Common myeloid progenitor, CD34-positive (primary cell): ENCODE measurements at regions of chr7 and their contacts with region 1.

Region 1: GRCh38 chr7:140745266-140746058 is 49.0 kb downstream of the NDUFB2 start:
- DNase-seq: peak; percentile 3 to 29 (median 15)
- H3K4me3 ChIP-seq: no peak overlapping the region
- H3K27ac ChIP-seq: no peak overlapping the region
- H3K4me1 ChIP-seq: peaks cover 0 to 8% (median 4%) of the 10 kb centered on the region in 4 experiments
- H3K27me3 ChIP-seq: no peaks in the 10 kb centered on the region

Region 2: DNA sequence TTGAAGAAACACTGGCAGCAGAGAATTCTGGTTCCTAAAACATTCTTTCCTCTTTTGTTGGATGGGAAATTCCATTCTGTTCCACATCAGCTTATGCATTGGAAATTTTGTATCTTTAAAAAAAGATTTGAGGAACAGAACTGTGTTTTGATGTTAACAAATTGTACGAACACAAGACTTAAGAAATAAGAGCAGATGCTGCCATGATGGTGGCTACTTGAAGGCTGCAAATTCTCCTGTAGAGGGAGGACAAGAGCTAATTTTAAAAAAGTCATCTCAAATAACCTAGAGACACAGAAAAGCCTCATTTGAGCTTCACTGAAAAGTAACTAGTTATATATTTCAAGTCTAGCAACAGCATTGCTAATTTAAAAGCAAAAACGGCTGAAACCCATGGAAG is 19.2 kb before region 1 on chr7:
- CTCF ChIA-PET with region 1: interaction called, 10 read pairs
- POLR2A ChIA-PET with region 1: no interaction called
- DNase-seq: peak; percentile 12 to 57 (median 45)
- H3K4me3 ChIP-seq: no peak overlapping the region
- H3K27ac ChIP-seq: no peak overlapping the region
- H3K4me1 ChIP-seq: no peaks in the 10 kb centered on the region
- H3K27me3 ChIP-seq: no peaks in the 10 kb centered on the region